HepG2 (cell line): ENCODE measurements at regions of chr7 and their contacts with region 1.

Region 1: GRCh38 chr7:139817249-139817648 is 11.8 kb upstream of the TBXAS1 start:
- DNase-seq: no peak
- ATAC-seq: no peak
- H3K4me3 ChIP-seq: no peak overlapping the region
- H3K27ac ChIP-seq: no peak overlapping the region
- H3K4me1 ChIP-seq: no peaks in the 10 kb centered on the region
- H3K27me3 ChIP-seq: peaks cover 0 to 3% of the 10 kb centered on the region in 2 experiments; a peak in 1 of 5 replicates
- CTCF ChIP-seq: no peak
- EP300 ChIP-seq: no peak
- POLR2A ChIP-seq: no peak
- RAD21 ChIP-seq: no peak

Region 2: DNA sequence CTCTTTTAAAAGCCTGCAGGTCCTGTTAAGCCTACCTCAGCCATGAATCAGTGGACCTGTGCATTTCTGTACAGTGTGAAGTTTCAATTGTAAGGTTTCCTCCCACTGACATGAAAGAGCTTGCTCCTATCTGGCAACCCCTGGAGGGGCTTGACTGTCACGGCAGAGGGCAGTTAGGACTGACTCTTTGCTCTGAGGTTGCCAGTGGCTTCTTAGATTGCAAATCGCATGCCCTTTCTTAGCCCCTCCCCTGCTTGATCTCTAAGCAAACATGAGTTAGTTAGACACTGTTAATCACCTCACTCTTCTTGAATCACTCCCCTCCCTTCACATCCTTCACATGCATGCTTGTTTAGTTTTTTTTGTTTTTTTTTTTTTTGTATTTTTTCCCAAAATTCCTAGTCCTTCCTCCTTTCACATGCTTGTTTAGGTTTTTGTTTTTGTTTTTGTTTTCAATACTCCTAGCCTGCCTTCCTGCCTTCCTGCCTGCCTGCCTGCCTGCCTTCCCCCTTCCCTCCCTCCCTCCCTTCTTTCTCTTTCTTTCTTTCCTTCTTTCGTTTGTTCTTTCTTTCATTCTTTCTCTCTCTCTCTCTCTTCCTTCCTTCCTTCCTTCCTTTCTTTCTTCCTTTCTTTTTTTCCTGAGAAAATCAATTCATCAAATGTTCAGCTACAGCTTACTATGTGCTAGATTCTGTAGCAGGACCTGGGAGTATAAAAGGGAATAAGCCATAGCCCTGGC is 33.4 kb before region 1 on chr7:
- CTCF ChIA-PET with region 1: no interaction called
- POLR2A ChIA-PET with region 1: no interaction called
- in situ Hi-C with region 1: no loop called
- intact Hi-C with region 1: loop called (anchors 5 kb)
- DNase-seq: no peak
- ATAC-seq: peak; percentile 38; the same call in 2 of the 3 replicates
- H3K4me3 ChIP-seq: no peak overlapping the region
- H3K27ac ChIP-seq: no peak overlapping the region
- H3K4me1 ChIP-seq: peaks cover 43% of the 10 kb centered on the region
- H3K27me3 ChIP-seq: no peaks in the 10 kb centered on the region
- CTCF ChIP-seq: no peak
- EP300 ChIP-seq: no peak
- POLR2A ChIP-seq: no peak
- RAD21 ChIP-seq: no peak